ENCODE measurements at regions of chr6 and their contacts with region 1.

Region 1: DNA sequence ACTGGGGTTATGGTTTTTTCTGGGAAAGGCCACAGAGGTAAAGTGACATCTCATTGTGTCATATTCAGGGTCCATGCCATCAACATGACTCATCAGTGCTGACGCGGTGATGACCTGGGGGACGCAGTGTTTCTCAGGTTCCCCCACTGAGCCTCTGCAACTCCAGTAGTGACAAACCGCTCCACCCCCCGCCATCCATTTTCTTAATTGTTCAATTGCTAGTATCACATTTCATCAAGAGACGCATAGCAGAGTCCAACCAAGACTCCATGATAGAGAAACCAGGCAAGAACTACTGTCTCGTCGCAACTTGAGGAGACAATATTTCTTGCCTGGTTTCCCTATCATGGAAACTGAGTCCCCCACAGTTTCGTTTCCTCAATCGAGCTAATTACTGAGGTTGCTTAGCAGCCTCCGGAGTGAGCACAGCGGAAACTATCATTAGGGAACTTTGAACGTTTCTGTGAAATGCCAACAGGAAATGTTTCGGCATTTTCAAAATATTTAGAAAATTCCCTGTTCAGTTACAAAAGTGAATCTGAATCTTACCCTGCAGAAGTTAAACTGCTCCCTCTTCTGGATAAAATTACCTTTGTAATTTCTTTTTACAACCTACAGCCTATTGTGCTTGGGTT is 12.2 kb upstream of the SERPINB1 start:
- DNase-seq: peak; percentile 85
- H3K4me3 Mint-ChIP-seq: peak overlapping the region; percentile 70
- H3K27ac Mint-ChIP-seq: peak overlapping the region; percentile 100
- H3K4me1 Mint-ChIP-seq: peaks cover 70% of the 10 kb centered on the region
- H3K27me3 Mint-ChIP-seq: no peaks in the 10 kb centered on the region

Region 2: DNA sequence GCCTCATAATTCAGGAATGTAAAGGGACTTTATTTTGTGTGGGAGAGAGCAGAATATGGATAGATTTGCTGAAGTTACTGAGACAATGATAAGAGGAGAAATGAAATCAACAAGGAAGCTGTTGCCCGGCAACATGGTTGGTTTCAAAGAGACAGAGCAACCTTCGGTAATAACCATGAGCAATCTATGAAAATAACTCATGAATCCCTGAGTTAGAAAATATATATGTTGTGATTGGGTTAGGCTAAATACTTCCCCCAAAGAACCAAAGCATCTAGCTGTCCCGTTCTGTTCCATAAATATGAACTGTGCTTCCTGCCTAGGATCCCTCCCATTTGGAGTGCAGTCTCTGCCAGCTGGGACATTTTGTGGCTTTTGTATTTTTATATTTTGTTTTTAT is 35.3 kb before region 1 on chr6:
- CTCF ChIA-PET with region 1: no interaction called
- POLR2A ChIA-PET with region 1: no interaction called
- DNase-seq: no peak
- H3K4me3 Mint-ChIP-seq: no peak overlapping the region
- H3K27ac Mint-ChIP-seq: no peak overlapping the region
- H3K4me1 Mint-ChIP-seq: peaks cover 45% of the 10 kb centered on the region
- H3K27me3 Mint-ChIP-seq: no peaks in the 10 kb centered on the region

Region 3: GRCh38 chr6:2876210-2877056 is 22.6 kb after region 1 on chr6:
- CTCF ChIA-PET with region 1: interaction called, 7 read pairs
- POLR2A ChIA-PET with region 1: interaction called, 27 read pairs
- DNase-seq: no peak
- H3K4me3 Mint-ChIP-seq: peak overlapping the region; percentile 81
- H3K27ac Mint-ChIP-seq: peak overlapping the region; percentile 91
- H3K4me1 Mint-ChIP-seq: peaks cover 77% of the 10 kb centered on the region
- H3K27me3 Mint-ChIP-seq: no peaks in the 10 kb centered on the region

Region 4: DNA sequence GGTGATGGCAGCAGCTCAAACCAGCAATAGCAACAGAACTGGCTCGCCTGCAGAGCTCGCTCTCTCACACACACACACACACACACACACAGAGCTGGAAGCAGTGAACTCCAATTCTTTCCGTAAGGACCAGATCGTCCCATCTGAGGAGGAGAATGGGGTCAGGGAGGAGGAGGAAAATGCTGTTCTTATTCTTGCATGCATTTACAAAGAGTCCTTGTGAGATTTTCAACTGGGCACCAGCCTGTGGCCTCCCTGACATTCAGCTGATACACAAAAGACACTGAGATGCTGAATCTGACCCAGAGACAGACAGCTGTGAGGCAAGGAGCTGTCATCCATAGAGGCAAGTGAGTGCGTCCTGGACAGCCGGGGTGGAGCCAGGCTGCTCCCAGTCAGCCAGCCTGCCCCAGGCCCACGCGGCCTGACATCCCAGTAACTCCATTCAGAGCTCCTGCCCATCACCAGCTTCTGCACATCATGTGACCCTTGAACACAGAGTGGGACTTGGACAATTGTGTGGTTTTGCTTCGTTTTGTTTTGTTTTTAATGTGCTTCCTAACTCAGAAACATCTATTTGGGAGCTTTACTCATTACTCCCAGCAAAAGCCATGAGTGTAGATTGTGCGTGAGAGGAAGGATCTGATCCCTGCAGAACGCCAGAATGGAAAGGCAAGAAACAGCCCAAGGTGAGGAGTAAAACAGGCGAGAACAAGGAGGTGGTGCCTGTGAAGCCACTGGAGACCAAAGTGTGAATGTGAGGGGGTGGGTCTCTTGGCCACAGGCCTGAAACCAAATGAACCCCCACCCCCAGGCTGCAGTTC is 47.2 kb after region 1 on chr6:
- CTCF ChIA-PET with region 1: interaction called, 3 read pairs
- POLR2A ChIA-PET with region 1: interaction called, 30 read pairs
- DNase-seq: no peak
- H3K4me3 Mint-ChIP-seq: peak overlapping the region; percentile 99
- H3K27ac Mint-ChIP-seq: peak overlapping the region; percentile 82
- H3K4me1 Mint-ChIP-seq: peaks cover 55% of the 10 kb centered on the region
- H3K27me3 Mint-ChIP-seq: peaks cover 3% of the 10 kb centered on the region

Region 5: GRCh38 chr6:2940010-2940850 is 86.4 kb after region 1 on chr6:
- CTCF ChIA-PET with region 1: interaction called, 170 read pairs
- POLR2A ChIA-PET with region 1: interaction called, 15 read pairs
- DNase-seq: peak; percentile 81
- H3K4me3 Mint-ChIP-seq: peak overlapping the region; percentile 69
- H3K27ac Mint-ChIP-seq: peak overlapping the region; percentile 94
- H3K4me1 Mint-ChIP-seq: peaks cover 57% of the 10 kb centered on the region
- H3K27me3 Mint-ChIP-seq: peaks cover 31% of the 10 kb centered on the region

Measured in activated CD4-positive, alpha-beta memory T cell treated with anti-CD3 and anti-CD28 coated beads, Interleukin-2, amount 10 ng/mL, durations not matched to agents 7 days and 5 days (primary cell).